PC-3 (cell line): ENCODE measurements at regions of chr4 and their contacts with region 1.

Region 1: DNA sequence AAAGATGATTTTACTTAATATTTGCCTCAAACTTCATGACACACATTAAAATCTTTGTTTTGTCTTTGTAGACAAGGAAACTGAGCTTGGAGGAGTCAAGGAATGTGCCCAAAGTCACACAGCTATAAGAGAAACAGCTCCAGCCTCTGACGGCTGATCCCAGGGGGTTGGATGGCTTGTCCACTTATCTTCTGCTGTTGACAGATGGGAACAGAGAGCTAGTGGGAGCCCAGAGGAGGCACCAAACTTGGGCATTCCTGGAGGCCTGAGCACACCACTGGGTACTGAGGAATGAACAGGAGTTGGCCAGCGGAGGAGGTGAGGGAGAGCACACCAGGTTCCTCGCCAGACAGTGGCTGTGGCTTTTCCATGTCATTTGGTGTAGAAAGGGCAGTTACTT is 56.4 kb upstream of the GPR78 start:
- DNase-seq: no peak
- ATAC-seq: no peak
- H3K4me3 ChIP-seq: no peak overlapping the region
- H3K27ac ChIP-seq: no peak overlapping the region
- H3K4me1 ChIP-seq: 0 out of 2 replicates have a peak, but pooled peaks cover 2% of the 10 kb centered on the region
- H3K27me3 ChIP-seq: no peaks in the 10 kb centered on the region
- CTCF ChIP-seq: no peak

Region 2: DNA sequence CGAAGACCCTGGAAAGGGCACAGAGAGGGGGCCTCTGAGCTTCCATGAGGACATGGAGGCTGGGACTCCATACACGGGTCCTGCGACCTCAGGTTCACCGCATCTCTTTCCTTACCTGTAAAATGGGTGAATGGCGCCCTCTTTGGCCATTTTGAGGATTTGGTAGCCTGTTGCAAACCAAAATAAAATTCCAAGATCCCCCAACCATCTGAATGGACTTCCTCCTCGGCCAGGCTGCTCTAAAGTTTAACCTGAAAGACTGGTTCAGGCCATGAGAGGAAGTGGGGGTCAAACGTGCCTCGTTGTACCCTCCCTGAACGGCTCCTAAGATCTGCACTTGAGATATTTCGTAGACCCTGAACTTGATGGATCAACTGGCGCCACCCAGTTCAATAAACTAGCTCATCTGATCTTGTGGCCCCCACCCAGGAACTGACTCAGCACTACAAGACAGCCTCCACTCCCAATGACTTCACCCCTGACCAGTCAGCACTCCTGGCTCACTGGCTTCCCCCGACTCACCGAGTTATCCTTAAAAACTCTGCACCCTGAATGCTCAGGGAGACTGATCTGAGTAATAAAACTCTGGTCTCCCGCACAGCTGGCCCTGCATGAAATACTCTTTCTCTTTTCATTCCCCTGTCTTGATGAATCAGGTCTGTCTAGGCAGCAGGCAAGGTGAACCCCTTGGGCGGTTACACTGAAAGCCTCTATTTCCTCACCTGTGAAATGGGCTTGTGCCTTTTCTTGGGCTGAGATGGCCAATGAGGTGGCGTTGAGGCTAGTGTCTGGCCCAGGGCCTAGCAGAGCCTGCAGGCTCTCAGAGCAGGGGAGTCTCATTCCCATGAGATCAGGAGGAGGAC is 23.6 kb after region 1 on chr4:
- CTCF ChIA-PET with region 1: no interaction called
- POLR2A ChIA-PET with region 1: no interaction called
- intact Hi-C with region 1: loop called (anchors 1 kb)
- DNase-seq: peak; percentile 85
- ATAC-seq: peak; percentile 86
- H3K4me3 ChIP-seq: 0 out of 2 replicates have a peak overlapping the region, but pooled peaks have one; percentile 24
- H3K27ac ChIP-seq: peak overlapping the region; percentile 98
- H3K4me1 ChIP-seq: peaks cover 33% of the 10 kb centered on the region
- H3K27me3 ChIP-seq: no peaks in the 10 kb centered on the region
- CTCF ChIP-seq: peak; percentile 73